ENCODE measurements at regions of chr17 and their contacts with region 1.

Region 1: GRCh38 chr17:1908699-1909309 is 79.0 kb downstream of the RPA1 start:
- DNase-seq: peak; percentile 62
- H3K4me3 ChIP-seq: no peak overlapping the region
- H3K27ac ChIP-seq: no peak overlapping the region
- H3K4me1 ChIP-seq: no peaks in the 10 kb centered on the region
- H3K27me3 ChIP-seq: no peaks in the 10 kb centered on the region
- CTCF ChIP-seq: peak; percentile 31 to 89 (median 80)
- POLR2A ChIP-seq: no peak

Region 2: GRCh38 chr17:1521086-1521640 is 387.6 kb before region 1 on chr17:
- intact Hi-C with region 1: no loop called
- DNase-seq: no peak
- H3K4me3 ChIP-seq: no peak overlapping the region
- H3K27ac ChIP-seq: no peak overlapping the region
- H3K4me1 ChIP-seq: no peaks in the 10 kb centered on the region
- H3K27me3 ChIP-seq: no peaks in the 10 kb centered on the region
- CTCF ChIP-seq: no peak
- POLR2A ChIP-seq: no peak

Region 3: GRCh38 chr17:1648963-1649843 is 259.6 kb before region 1 on chr17:
- intact Hi-C with region 1: no loop called
- DNase-seq: peak; percentile 93
- H3K4me3 ChIP-seq: peak overlapping the region; percentile 72 to 77
- H3K27ac ChIP-seq: peak overlapping the region; percentile 92 to 96
- H3K4me1 ChIP-seq: peaks cover 10% of the 10 kb centered on the region
- H3K27me3 ChIP-seq: no peaks in the 10 kb centered on the region
- CTCF ChIP-seq: peak in 2 of 4 experiments; percentile 88 to 94
- POLR2A ChIP-seq: peak; percentile 74

Region 4: GRCh38 chr17:2029911-2030778 is 121.3 kb after region 1 on chr17 and contains the start of gene DPH1:
- intact Hi-C with region 1: loop called (anchors 1 kb)
- DNase-seq: peak; percentile 86
- H3K4me3 ChIP-seq: peak within 1 kb of the TSS; percentile 82 to 84
- H3K27ac ChIP-seq: peak within 1 kb of the TSS; percentile 61 to 62
- H3K4me1 ChIP-seq: no peaks in the 10 kb centered on the region
- H3K27me3 ChIP-seq: no peaks in the 10 kb centered on the region
- CTCF ChIP-seq: peak in 2 of 4 experiments; percentile 26 to 34
- POLR2A ChIP-seq: peak; percentile 47
- total RNA-seq, gene DPH1: 61.4 to 84.1 TPM

Region 5: GRCh38 chr17:2041561-2042366 is 133.0 kb after region 1 on chr17 and contains the start of gene OVCA2:
- intact Hi-C with region 1: loop called (anchors 5 kb)
- DNase-seq: peak; percentile 94
- H3K4me3 ChIP-seq: peak within 1 kb of the TSS; percentile 66 to 68
- H3K27ac ChIP-seq: peak within 1 kb of the TSS; percentile 86 to 89
- H3K4me1 ChIP-seq: peaks cover 8% of the 10 kb centered on the region
- H3K27me3 ChIP-seq: no peaks in the 10 kb centered on the region
- CTCF ChIP-seq: peak; percentile 21 to 73 (median 58)
- POLR2A ChIP-seq: peak; percentile 82
- total RNA-seq, gene OVCA2: 52.2 to 57.5 TPM